IMR-90 (cell line): ENCODE measurements at regions of chr2 and their contacts with region 1.

Region 1: DNA sequence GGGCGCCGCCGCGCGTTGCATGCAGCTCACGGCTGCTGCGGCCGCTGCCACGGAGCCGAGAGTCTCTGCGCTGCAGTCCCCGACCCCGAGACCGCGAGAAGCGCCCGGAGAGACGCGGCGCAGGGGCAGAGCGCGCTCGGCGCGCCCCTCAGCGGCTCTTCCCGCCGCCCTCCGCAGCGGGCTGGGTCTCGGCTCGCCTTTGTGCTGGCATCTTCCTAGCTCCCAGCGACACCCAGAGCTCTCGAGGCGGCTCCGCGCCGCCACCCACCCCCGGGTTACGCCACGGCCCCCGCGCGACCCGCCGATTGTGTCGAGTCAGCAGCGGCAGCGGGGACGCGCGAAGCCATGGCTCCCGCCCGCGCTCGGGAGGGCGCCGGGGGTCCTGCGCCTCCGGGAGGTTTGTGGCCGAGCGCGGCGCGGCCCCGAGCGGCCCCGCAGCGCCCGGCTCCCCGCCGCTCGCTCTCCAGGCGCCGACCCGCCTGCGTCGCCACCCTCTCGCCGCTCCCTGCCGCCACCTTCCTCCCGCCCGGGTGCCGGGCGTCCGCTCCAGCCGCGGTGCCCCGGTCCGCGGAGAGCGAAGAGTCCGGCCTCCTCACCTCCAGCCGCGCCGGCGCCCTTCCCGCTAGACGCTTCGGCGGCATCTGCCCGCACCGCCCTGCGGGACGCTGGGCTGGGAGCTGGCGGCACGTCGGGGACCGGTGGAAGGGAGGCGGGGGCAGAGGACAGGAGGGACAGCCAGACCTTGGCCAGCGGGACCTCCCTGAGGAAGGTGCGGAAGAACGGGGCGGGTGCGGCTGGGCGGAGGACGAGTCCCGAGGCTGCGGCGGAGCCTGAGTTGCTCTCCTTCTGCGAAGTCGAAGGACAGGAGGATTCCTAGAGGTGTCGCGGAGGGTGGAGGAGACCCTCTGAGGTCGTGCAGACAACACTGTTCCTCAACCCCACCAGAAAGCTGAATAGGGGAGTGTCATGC is 46.3 kb upstream of the CCDC150 start:
- DNase-seq: peak; percentile 57
- ATAC-seq: peak; percentile 83
- H3K4me3 ChIP-seq: peak within 1 kb of the TSS; percentile 96
- H3K27ac ChIP-seq: peak within 1 kb of the TSS; percentile 50; the same call in 1 of the 2 replicates
- H3K4me1 ChIP-seq: no peaks in the 10 kb centered on the region
- H3K27me3 ChIP-seq: no peaks in the 10 kb centered on the region
- CTCF ChIP-seq: no peak
- POLR2A ChIP-seq: peak; percentile 31; the same call in 1 of the 2 replicates
- RAD21 ChIP-seq: no peak

Region 2: GRCh38 chr2:195181059-195181705 is 1412.0 kb before region 1 on chr2:
- CTCF ChIA-PET with region 1: no interaction called
- POLR2A ChIA-PET with region 1: no interaction called
- dilution Hi-C with region 1: no loop called
- in situ Hi-C with region 1: no loop called
- intact Hi-C with region 1: no loop called
- DNase-seq: no peak
- ATAC-seq: no peak
- H3K4me3 ChIP-seq: no peak overlapping the region
- H3K27ac ChIP-seq: no peak overlapping the region
- H3K4me1 ChIP-seq: no peaks in the 10 kb centered on the region
- H3K27me3 ChIP-seq: no peaks in the 10 kb centered on the region
- CTCF ChIP-seq: no peak
- POLR2A ChIP-seq: no peak
- RAD21 ChIP-seq: no peak

Region 3: DNA sequence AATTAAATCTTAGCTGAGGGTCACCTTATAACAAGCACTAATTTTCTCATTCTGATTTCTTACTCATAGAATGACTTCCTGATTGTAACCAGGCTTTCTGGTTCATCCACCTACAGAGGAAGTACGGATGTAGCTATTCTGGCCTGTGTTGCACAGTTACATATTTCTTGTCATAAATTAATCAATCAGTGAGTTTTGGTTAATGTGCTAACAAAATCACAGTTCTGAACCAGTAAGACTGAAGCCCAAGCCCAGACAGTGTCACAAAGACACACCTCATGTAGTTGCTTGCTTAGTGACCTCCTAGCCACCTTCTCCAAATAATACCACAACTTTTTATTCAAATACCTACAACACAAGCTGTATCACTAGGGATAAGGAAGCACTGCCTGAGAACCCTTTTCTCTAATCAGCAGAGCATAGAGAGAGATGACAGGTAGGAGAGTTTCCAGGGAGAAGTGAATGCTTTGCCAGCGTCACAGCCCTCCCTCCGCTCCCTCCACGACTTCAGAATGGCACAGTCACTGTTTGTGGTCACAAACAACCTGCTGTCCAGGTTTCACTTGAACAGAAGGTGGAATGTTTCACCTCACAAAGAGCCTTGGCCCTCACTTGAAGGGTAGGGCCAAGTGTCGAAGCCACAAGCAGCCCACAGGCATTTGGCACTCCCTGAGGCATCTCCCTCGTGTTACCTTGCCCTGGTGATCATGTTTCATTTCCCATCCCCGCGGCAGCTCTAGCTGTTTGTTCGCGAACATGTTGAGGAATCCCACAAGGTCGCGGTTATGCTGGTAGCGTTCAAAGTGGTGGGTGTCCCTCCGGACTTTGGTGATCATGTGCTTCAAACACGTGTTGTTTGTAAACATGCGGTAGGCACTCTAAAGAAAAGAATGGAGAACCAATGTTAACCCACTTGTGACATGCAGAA is 301.1 kb before region 1 on chr2:
- CTCF ChIA-PET with region 1: no interaction called
- POLR2A ChIA-PET with region 1: no interaction called
- dilution Hi-C with region 1: no loop called
- in situ Hi-C with region 1: no loop called
- intact Hi-C with region 1: loop called (anchors 5 kb)
- DNase-seq: no peak
- ATAC-seq: no peak
- H3K4me3 ChIP-seq: no peak overlapping the region
- H3K27ac ChIP-seq: no peak overlapping the region
- H3K4me1 ChIP-seq: peaks cover 11% of the 10 kb centered on the region
- H3K27me3 ChIP-seq: no peaks in the 10 kb centered on the region
- CTCF ChIP-seq: no peak
- POLR2A ChIP-seq: no peak
- RAD21 ChIP-seq: no peak